Vagina (tissue), 2 donors: ENCODE measurements at regions of chr12 and their contacts with region 1.

Region 1: DNA sequence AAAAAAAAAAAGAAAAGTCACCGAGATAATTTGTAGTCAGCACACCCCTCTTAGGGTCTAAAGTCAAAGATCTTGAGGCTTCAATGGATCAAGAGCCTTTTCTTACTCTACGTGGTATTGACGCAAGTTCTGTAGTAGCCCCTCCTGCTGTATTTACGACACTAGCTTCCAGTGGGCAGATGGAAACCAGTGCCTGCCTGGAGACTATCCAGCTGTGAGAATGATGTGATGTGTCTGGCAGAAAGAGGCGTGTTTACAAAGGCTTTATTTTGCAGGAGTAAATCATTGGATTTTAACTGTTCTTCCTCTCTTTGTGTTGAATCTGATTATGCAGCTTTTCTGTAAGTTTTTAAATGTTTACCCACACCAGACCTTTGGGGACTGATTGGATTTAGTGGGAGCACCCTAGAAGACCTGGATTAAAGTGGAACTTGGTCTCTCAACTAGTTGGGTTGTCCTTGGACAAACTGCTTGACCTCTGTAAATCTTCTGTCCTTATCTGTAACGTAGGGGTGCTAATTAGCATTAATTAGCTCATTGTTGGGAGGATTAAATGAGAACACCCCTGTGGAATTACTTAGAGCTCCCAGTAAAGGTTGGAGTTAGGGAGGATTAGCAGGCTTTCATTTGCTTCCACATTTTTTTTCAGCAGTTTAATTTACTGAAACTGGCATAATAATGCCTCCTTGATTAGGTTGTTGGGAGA is 72.4 kb downstream of the RASSF3 start:
- DNase-seq: no peak
- H3K4me3 ChIP-seq: no peak overlapping the region
- H3K27ac ChIP-seq: peak overlapping the region; percentile 73
- H3K4me1 ChIP-seq: peaks cover 55% of the 10 kb centered on the region
- H3K27me3 ChIP-seq: no peaks in the 10 kb centered on the region
- CTCF ChIP-seq: no peak
- POLR2A ChIP-seq: no peak

Region 2: DNA sequence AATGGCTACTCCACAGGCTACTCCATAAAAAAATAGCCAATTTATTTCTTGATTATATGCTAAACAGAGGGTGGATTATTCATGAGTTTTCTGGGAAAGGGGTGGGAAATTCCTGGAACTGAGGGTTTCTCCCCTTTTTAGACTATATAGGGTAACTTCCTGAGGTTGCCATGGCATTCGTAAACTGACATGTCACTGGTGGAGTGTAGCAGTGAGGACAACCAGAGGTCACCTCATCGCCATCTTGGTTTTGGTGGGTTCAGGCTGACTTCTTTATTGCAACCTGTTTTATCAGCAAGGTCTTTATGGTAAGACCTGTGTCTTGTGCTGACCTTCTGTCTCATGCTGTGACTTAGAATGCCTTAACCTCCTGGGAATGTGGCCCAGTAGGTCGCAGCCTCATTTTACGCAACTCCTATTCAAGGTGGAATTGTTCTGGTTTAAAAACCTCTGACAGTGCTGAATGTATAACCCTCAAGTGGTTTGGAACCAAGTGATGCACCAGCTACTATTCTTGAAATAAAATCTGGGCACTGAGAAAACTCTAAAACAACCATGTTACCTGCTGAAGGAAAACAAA is 319.9 kb before region 1 on chr12:
- intact Hi-C with region 1: no loop called
- DNase-seq: no peak
- H3K4me3 ChIP-seq: no peak overlapping the region
- H3K27ac ChIP-seq: no peak overlapping the region
- H3K4me1 ChIP-seq: no peaks in the 10 kb centered on the region
- H3K27me3 ChIP-seq: no peaks in the 10 kb centered on the region
- CTCF ChIP-seq: no peak
- POLR2A ChIP-seq: no peak

Region 3: DNA sequence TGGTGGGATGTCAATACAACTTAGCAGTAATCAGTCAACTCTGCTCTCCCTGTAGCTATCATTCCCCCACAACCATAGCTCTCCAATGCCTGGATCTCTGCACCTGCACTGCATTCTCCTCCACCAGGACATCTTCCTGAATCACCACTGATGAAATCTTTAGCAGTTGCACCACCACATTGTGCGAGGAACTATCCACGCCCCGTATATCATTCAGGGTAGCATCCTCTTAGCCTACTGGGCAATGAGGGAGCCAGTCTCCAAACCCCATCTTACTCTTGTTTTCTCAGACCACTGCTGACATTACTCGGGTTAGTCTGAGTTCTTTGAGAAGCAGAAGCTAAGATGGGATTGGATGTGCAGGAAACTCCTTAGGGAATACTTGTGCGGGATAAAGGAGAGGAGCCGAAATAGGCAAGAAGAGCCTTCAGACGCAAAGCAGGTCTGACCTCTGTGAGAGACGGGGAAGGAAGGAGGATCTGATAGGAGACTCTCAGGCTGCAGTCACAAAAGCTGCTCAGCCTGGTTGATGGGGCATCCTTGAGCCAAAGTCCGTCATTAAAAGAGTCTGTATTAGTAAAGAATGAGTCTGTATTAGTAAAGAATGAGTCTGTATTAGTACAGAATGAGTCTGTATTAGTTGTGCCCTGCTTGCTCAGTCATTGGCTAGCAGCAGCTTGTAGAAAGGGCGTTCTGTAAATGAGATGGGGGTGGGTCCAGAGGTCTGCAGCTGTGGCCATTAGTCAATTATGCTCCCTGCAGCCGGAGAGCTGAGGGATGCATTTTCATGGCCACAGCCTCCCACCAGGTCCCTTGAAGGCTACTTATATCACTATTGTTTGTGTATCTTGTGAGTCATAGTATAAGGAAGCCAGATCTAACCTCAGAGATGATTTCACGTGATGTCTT is 122.1 kb before region 1 on chr12:
- intact Hi-C with region 1: loop called (anchors 5 kb)
- DNase-seq: no peak
- H3K4me3 ChIP-seq: no peak overlapping the region
- H3K27ac ChIP-seq: no peak overlapping the region
- H3K4me1 ChIP-seq: no peaks in the 10 kb centered on the region
- H3K27me3 ChIP-seq: no peaks in the 10 kb centered on the region
- CTCF ChIP-seq: no peak
- POLR2A ChIP-seq: no peak

Region 4: GRCh38 chr12:64583771-64584421 is 98.8 kb before region 1 on chr12:
- intact Hi-C with region 1: no loop called
- DNase-seq: no peak
- H3K4me3 ChIP-seq: no peak overlapping the region
- H3K27ac ChIP-seq: peak overlapping the region; percentile 1
- H3K4me1 ChIP-seq: peaks cover 20% of the 10 kb centered on the region
- H3K27me3 ChIP-seq: no peaks in the 10 kb centered on the region
- CTCF ChIP-seq: no peak
- POLR2A ChIP-seq: no peak

Region 5: DNA sequence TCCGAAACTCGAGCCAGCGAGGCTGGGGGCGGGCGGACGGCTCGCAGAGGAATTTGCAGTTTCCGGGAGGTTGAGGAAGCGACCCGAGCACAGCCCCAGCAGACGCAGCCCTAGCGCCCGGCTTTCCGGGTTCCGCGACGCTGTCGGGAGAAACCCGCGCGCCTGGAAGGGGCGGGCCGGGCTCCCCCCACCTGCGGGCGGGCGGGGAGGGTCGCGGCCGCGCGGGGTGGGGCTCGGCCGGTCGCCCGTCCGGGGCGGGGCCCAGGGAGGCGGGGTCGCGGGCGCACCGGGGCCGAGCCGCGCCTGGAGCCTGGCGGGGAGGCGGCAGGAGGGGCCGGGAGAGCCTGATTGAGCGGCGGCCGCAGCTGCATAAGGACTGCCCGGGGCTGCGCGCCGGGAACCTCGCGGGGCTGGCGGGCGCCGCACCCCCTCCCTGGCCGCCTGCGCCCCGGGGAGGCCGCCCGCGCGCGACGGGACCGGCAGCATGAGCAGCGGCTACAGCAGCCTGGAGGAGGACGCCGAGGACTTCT is 72.5 kb before region 1 on chr12 and contains the start of gene RASSF3:
- intact Hi-C with region 1: loop called (anchors 10 kb)
- DNase-seq: no peak
- H3K4me3 ChIP-seq: peak within 1 kb of the TSS; percentile 91 to 94
- H3K27ac ChIP-seq: peak within 1 kb of the TSS; percentile 93
- H3K4me1 ChIP-seq: peaks cover 12% of the 10 kb centered on the region
- H3K27me3 ChIP-seq: no peaks in the 10 kb centered on the region
- CTCF ChIP-seq: no peak
- POLR2A ChIP-seq: peak in 1 of 2 donors; percentile 37
- total RNA-seq, gene RASSF3: 29.5 TPM